ENCODE measurements at regions of chr4 and their contacts with region 1.

Region 1: GRCh38 chr4:138242076-138242833 is at the start of gene SLC7A11:
- H3K4me3 Mint-ChIP-seq: peak within 1 kb of the TSS; percentile 91
- H3K27ac Mint-ChIP-seq: peak within 1 kb of the TSS; percentile 98
- H3K4me1 Mint-ChIP-seq: peaks cover 19% of the 10 kb centered on the region
- H3K27me3 Mint-ChIP-seq: no peaks in the 10 kb centered on the region

Region 2: DNA sequence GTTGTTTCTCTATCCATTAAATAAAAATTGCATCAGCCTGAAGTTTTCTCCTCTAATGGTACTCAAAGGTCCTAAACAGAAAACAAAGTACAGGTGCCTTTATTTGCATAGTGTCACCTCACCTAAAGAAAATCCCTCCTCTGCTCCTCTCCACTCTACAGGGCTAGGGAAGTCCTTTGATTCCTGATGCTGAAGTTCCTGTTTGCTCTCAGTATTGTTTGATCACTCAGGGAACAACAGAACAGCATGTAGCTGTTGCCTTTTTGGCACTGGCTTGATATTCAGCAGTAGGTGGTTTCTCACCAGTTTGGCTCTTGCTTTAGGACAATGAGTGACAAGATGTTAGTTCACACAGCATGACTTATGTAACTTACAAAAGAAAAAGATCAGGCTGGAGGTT is 156.1 kb after region 1 on chr4:
- intact Hi-C with region 1: loop called (anchors 2 kb)
- H3K4me3 Mint-ChIP-seq: no peak overlapping the region
- H3K27ac Mint-ChIP-seq: peak overlapping the region; percentile 86
- H3K4me1 Mint-ChIP-seq: peaks cover 51% of the 10 kb centered on the region
- H3K27me3 Mint-ChIP-seq: no peaks in the 10 kb centered on the region

Region 3: DNA sequence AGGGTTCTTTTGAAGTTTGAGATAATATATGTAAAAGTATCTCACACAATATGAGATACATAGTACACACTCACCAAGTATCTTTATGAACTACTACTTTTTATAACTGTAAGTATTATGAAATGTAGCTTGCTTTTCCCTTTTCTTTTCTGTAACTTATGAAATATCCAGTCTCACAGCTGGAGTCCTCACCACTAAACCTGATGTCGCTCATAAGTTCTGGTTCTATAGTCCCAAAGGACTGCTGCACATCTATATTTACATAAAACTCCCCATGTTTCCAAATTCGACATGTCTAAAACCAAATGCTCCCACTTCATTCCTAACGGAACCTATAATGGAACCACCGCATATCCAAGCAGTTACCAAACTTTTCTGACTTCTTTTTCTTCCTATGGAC is 186.4 kb after region 1 on chr4:
- intact Hi-C with region 1: no loop called
- H3K4me3 Mint-ChIP-seq: no peak overlapping the region
- H3K27ac Mint-ChIP-seq: no peak overlapping the region
- H3K4me1 Mint-ChIP-seq: peaks cover 28% of the 10 kb centered on the region
- H3K27me3 Mint-ChIP-seq: no peaks in the 10 kb centered on the region

Region 4: GRCh38 chr4:138562544-138562991 is 320.3 kb after region 1 on chr4:
- intact Hi-C with region 1: no loop called
- H3K4me3 Mint-ChIP-seq: no peak overlapping the region
- H3K27ac Mint-ChIP-seq: no peak overlapping the region
- H3K4me1 Mint-ChIP-seq: no peaks in the 10 kb centered on the region
- H3K27me3 Mint-ChIP-seq: peaks cover 5% of the 10 kb centered on the region

Region 5: GRCh38 chr4:138727731-138728130 is 485.5 kb after region 1 on chr4:
- intact Hi-C with region 1: no loop called
- H3K4me3 Mint-ChIP-seq: no peak overlapping the region
- H3K27ac Mint-ChIP-seq: no peak overlapping the region
- H3K4me1 Mint-ChIP-seq: no peaks in the 10 kb centered on the region
- H3K27me3 Mint-ChIP-seq: peaks cover 6% of the 10 kb centered on the region

Region 6: GRCh38 chr4:139934057-139934707 is 1691.9 kb after region 1 on chr4:
- intact Hi-C with region 1: no loop called
- H3K4me3 Mint-ChIP-seq: no peak overlapping the region
- H3K27ac Mint-ChIP-seq: no peak overlapping the region
- H3K4me1 Mint-ChIP-seq: no peaks in the 10 kb centered on the region
- H3K27me3 Mint-ChIP-seq: no peaks in the 10 kb centered on the region